GM12878 (cell line): ENCODE measurements at regions of chr12 and their contacts with region 1.

Region 1: DNA sequence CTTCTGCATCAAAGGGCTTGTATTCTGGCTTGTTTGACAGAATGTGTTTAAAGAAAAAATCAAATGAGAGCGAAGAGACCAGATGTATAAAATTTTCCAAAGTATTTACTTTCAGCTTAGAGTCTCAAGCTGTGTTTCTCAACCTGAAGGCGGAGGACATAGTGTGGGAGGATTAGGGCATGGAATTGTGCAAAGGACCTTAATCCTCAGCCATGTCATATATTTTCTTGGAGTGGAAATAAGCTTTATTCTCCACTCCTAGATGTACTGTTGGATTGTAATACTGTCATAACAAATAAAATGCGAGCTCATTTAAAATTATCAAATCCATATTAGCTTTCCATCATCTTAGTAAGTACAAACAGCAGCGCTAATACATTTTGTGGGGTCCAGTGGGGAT is 154.0 kb downstream of the PAH start:
- DNase-seq: no peak
- ATAC-seq: no peak
- H3K4me3 ChIP-seq: no peak overlapping the region
- H3K27ac ChIP-seq: no peak overlapping the region
- H3K4me1 ChIP-seq: no peaks in the 10 kb centered on the region
- H3K27me3 ChIP-seq: no peaks in the 10 kb centered on the region
- CTCF ChIP-seq: no peak
- EP300 ChIP-seq: no peak
- POLR2A ChIP-seq: no peak
- RAD21 ChIP-seq: no peak

Region 2: GRCh38 chr12:102776041-102776440 is 13.0 kb after region 1 on chr12:
- CTCF ChIA-PET with region 1: interaction called, 11 read pairs
- POLR2A ChIA-PET with region 1: interaction called, 7 read pairs
- RAD21 ChIA-PET with region 1: interaction called, 11 read pairs
- SMC1A ChIA-PET with region 1: interaction called, 33 read pairs
- in situ Hi-C with region 1: no loop called
- intact Hi-C with region 1: no loop called
- DNase-seq: no peak
- ATAC-seq: peak; percentile 93
- H3K4me3 ChIP-seq: no peak overlapping the region
- H3K27ac ChIP-seq: no peak overlapping the region
- H3K4me1 ChIP-seq: no peaks in the 10 kb centered on the region
- H3K27me3 ChIP-seq: no peaks in the 10 kb centered on the region
- CTCF ChIP-seq: no peak
- EP300 ChIP-seq: peak; percentile 69 to 82; a peak in 3 of 4 replicates
- POLR2A ChIP-seq: no peak
- RAD21 ChIP-seq: no peak

Region 3: DNA sequence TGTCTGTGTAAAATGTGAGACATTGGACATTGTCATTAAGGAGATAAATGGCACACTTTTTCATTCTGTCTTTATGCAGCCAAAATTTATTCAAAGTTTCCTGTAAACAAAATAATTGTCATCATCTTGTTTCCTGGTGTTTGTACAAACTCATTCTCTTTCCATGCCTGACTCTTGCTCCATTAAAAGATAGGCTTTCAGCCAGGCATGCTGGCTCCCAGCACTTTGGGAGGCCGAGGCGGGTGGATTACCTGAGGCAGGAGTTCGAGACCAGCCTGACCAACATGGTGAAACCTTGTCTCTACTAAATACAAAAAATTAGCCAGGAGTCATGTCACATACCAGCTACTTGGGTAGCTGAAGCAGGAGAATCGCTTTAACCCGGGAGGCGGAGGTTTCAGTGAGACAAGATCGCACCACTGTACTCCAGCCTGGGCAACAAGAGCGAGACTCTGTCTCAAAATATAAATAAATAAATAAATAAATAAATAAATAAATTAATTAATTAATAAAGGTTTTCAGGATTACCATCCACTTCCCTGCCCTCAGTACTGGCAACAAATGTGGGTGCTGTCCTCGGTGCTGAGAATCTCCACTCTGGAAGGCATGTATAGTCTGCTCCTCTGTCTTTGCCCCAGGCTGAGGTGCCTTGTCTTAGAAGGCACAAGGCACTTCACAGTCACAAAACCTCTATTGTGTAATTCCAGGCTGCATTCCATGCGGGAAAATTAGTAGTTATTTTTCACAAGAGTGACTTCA is 70.8 kb after region 1 on chr12:
- CTCF ChIA-PET with region 1: no interaction called
- POLR2A ChIA-PET with region 1: no interaction called
- RAD21 ChIA-PET with region 1: no interaction called
- SMC1A ChIA-PET with region 1: no interaction called
- in situ Hi-C with region 1: no loop called
- intact Hi-C with region 1: no loop called
- DNase-seq: no peak
- ATAC-seq: no peak
- H3K4me3 ChIP-seq: no peak overlapping the region
- H3K27ac ChIP-seq: no peak overlapping the region
- H3K4me1 ChIP-seq: no peaks in the 10 kb centered on the region
- H3K27me3 ChIP-seq: no peaks in the 10 kb centered on the region
- CTCF ChIP-seq: no peak
- EP300 ChIP-seq: no peak
- POLR2A ChIP-seq: no peak
- RAD21 ChIP-seq: no peak